Kidney (tissue), 22 donors: ENCODE measurements at regions of chr6 and their contacts with region 1.

Region 1: GRCh38 chr6:129498950-129499842 is 210.8 kb downstream of the ARHGAP18 start:
- DNase-seq: peak in 2 of 5 donors; percentile 76 to 78
- H3K4me3 ChIP-seq: peak overlapping the region in 1 of 3 donors; percentile 16
- H3K27ac ChIP-seq: no peak overlapping the region
- H3K4me1 ChIP-seq: peaks cover 0 to 2% (median 0%) of the 10 kb centered on the region in 3 donors
- H3K27me3 ChIP-seq: no peaks in the 10 kb centered on the region
- CTCF ChIP-seq: peak; percentile 48

Region 2: GRCh38 chr6:129162605-129163004 is 336.6 kb before region 1 on chr6:
- intact Hi-C with region 1: no loop called
- DNase-seq: no peak
- H3K4me3 ChIP-seq: no peak overlapping the region
- H3K27ac ChIP-seq: no peak overlapping the region
- H3K4me1 ChIP-seq: no peaks in the 10 kb centered on the region
- H3K27me3 ChIP-seq: no peaks in the 10 kb centered on the region
- CTCF ChIP-seq: no peak

Region 3: DNA sequence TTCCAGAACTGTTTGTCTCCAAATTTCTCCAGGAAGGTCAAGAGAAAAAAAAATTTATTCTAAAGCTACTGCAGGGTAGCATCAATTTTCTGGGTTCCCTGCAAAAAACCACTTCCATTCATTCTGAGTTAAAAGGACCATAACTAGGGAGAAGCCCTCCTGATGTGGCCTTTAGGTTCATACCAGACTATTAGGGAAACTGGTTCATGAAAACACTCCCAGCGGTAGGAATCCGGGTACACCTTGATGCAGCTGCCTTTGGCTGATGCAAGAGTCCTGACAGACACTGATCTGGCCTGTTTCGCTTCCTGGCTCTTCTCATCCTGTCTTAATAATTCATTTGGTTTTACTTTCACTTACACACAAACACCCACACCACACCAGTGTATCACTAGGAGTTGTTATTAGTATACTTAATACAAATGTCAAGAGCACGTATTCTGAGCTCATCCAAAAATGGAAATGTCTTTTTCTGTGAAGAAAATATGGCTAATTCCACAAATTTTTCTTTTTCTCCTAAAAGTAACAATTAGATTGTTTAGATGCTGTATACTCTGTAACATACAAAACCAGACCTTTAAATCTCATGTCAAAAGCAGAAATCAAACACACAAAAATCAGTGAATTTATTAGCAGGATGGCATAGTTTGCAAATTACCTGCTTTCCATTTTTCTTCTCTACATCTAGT is 249.2 kb after region 1 on chr6:
- intact Hi-C with region 1: loop called (anchors 10 kb)
- DNase-seq: peak in 1 of 5 donors; percentile 26
- H3K4me3 ChIP-seq: no peak overlapping the region
- H3K27ac ChIP-seq: no peak overlapping the region
- H3K4me1 ChIP-seq: peaks cover 0 to 6% (median 0%) of the 10 kb centered on the region in 3 donors
- H3K27me3 ChIP-seq: no peaks in the 10 kb centered on the region
- CTCF ChIP-seq: no peak